ENCODE measurements at regions of chr4 and their contacts with region 1.

Region 1: GRCh38 chr4:143346206-143346605 is 9.5 kb downstream of the GAB1 start:
- DNase-seq: peak; percentile 82
- H3K4me3 Mint-ChIP-seq: peak overlapping the region; percentile 33
- H3K27ac Mint-ChIP-seq: no peak overlapping the region
- H3K4me1 Mint-ChIP-seq: peaks cover 29% of the 10 kb centered on the region
- H3K27me3 Mint-ChIP-seq: no peaks in the 10 kb centered on the region
- CTCF ChIP-seq: no peak

Region 2: DNA sequence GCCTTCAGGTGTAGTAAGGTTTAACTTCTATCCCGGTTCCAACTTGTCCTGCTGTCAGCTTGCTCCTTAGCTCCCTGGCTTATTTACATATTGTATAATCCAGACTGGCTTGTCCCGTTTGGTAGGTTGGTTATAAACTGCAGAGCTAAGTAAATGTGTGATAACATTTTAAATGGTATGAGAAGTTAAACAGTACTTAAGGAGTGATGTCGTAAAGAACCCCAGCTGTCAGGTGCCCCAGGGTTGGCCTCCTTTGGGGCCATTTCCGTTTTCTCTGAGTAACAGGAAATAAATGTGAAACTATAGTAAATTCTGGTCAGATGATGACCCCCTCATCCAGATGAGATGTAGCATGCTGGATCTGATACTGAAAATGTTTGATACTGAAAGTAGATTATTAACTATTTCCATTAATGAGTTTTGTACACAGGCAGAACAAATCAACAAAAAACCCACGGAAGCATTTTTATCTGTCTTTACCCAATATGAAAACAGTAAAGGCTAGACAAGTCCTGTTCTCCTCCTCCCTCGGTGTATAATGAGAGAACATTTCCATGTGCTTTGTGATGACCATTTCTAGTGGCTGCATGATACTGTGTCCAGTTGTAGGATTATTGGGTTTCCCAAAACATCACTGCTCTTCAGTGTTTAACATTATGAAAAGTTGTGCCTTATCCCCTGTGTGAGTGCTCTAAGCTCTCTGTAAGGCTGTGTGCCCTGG is 12.9 kb after region 1 on chr4:
- CTCF ChIA-PET with region 1: interaction called, 7 read pairs
- POLR2A ChIA-PET with region 1: interaction called, 66 read pairs
- intact Hi-C with region 1: no loop called
- DNase-seq: peak; percentile 52
- H3K4me3 Mint-ChIP-seq: peak overlapping the region; percentile 7
- H3K27ac Mint-ChIP-seq: peak overlapping the region; percentile 58
- H3K4me1 Mint-ChIP-seq: peaks cover 57% of the 10 kb centered on the region
- H3K27me3 Mint-ChIP-seq: no peaks in the 10 kb centered on the region
- CTCF ChIP-seq: no peak

Region 3: GRCh38 chr4:143381171-143382118 is 35.2 kb after region 1 on chr4:
- CTCF ChIA-PET with region 1: interaction called, 3 read pairs
- POLR2A ChIA-PET with region 1: interaction called, 16 read pairs
- intact Hi-C with region 1: no loop called
- DNase-seq: peak; percentile 69
- H3K4me3 Mint-ChIP-seq: no peak overlapping the region
- H3K27ac Mint-ChIP-seq: peak overlapping the region; percentile 86
- H3K4me1 Mint-ChIP-seq: peaks cover 19% of the 10 kb centered on the region
- H3K27me3 Mint-ChIP-seq: no peaks in the 10 kb centered on the region
- CTCF ChIP-seq: no peak

Region 4: GRCh38 chr4:143389579-143390195 is 43.5 kb after region 1 on chr4:
- CTCF ChIA-PET with region 1: no interaction called
- POLR2A ChIA-PET with region 1: interaction called, 12 read pairs
- intact Hi-C with region 1: no loop called
- DNase-seq: peak; percentile 60
- H3K4me3 Mint-ChIP-seq: peak overlapping the region; percentile 5
- H3K27ac Mint-ChIP-seq: peak overlapping the region; percentile 69
- H3K4me1 Mint-ChIP-seq: peaks cover 25% of the 10 kb centered on the region
- H3K27me3 Mint-ChIP-seq: no peaks in the 10 kb centered on the region
- CTCF ChIP-seq: no peak

Region 5: DNA sequence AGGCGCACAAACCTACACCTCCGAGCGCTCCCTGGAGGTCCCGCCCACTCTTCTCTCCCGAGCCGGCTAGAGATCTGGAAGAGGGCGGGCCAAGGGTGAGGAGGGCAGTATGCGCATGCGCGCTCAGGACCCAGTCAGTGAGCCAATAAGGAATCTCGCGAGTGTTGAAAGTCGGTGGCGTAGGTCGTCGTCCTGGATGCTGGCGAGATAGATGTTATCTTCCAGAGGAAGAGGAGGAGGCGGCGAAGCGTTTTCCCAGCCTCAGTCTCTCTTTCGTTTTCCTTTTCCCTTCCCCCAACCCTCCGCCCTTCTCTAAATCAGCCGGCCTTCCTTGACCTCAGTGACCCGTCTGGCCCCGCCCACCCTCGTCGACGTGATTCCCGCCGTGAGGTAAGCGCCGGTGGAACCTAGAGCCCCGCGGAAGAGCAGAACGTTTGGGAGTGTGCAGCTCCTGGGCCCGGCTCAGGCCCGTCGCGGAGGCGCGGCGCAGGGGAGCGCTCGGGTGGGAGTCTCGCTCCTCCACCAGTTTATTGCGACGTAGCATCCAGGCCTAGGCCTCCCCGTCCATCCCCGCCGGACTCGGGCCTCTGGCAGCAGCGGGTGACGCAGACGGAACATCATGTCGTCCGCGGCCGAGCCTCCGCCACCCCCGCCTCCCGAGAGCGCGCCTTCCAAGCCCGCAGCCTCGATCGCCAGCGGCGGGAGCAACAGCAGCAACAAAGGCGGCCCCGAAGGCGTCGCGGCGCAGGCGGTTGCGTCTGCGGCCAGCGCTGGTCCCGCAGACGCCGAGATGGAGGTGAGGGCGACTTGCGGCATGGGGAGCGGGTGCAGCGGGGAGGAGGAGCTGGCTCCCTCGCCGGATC is 167.3 kb after region 1 on chr4 and contains the start of gene SMARCA5:
- CTCF ChIA-PET with region 1: interaction called, 3 read pairs
- POLR2A ChIA-PET with region 1: interaction called, 14 read pairs
- intact Hi-C with region 1: no loop called
- DNase-seq: peak; percentile 99
- H3K4me3 Mint-ChIP-seq: peak within 1 kb of the TSS; percentile 98
- H3K27ac Mint-ChIP-seq: peak within 1 kb of the TSS; percentile 91
- H3K4me1 Mint-ChIP-seq: peaks cover 15% of the 10 kb centered on the region
- H3K27me3 Mint-ChIP-seq: peaks cover 18% of the 10 kb centered on the region
- CTCF ChIP-seq: no peak
- total RNA-seq, gene SMARCA5: 47.2 and 49.0 TPM in 2 replicates